T-cell (primary cell): ENCODE measurements at regions of chr20 and their contacts with region 1.

Region 1: GRCh38 chr20:24948939-24949679 is at the start of gene CST7:
- DNase-seq: peak; percentile 64 to 91 (median 83)
- ATAC-seq: peak; percentile 89 to 95 (median 92)
- H3K4me3 ChIP-seq: peak within 1 kb of the TSS in 1 of 2 donors; percentile 87
- H3K4me3 Mint-ChIP-seq: peak within 1 kb of the TSS; percentile 69 to 85 (median 80)
- H3K27ac ChIP-seq: peak within 1 kb of the TSS; percentile 95
- H3K27ac Mint-ChIP-seq: peak within 1 kb of the TSS; percentile 87 to 93
- H3K4me1 ChIP-seq: peaks cover 5 to 56% of the 10 kb centered on the region in 2 experiments
- H3K4me1 Mint-ChIP-seq: peaks cover 43 to 69% (median 51%) of the 10 kb centered on the region in 3 donors
- H3K27me3 ChIP-seq: no peaks in the 10 kb centered on the region
- H3K27me3 Mint-ChIP-seq: no peaks in the 10 kb centered on the region
- total RNA-seq, gene CST7: 22.8 to 92.0 (median 46.2) TPM

Region 2: DNA sequence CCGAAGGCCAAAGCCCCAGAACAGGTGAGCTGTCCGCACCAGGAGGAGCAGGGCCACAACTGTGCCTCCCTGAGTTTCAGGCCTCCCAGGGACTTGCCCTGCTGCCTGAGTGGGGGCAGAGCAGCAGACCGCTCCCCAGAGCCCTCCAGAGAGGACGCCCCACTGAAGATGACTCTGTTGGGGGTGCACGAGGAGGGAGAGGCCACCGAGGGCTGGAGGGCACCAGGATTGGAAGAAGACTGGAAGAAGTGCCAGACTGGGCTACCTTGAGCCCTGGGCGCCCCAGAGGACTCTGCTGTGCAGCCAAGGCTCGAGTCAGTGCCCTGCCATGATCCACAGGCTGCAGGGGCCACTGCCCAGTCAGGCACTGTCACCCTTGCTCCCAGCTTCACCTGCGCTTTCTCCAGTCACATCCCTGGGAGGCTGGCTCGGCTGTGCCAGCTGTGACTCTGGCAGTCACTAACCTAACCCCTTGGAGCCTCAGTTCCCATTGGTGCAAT is 11.2 kb after region 1 on chr20:
- CTCF ChIA-PET with region 1: interaction called in 1 of 2 experiments, 10 read pairs
- POLR2A ChIA-PET with region 1: interaction called in 1 of 2 experiments, 5 read pairs
- DNase-seq: no peak
- ATAC-seq: peak in 1 of 4 experiments; percentile 18
- H3K4me3 ChIP-seq: peak overlapping the region in 1 of 2 donors; percentile 5
- H3K4me3 Mint-ChIP-seq: no peak overlapping the region
- H3K27ac ChIP-seq: peak overlapping the region; percentile 98
- H3K27ac Mint-ChIP-seq: peak overlapping the region; percentile 77 to 88
- H3K4me1 ChIP-seq: peaks cover 0 to 94% of the 10 kb centered on the region in 2 experiments
- H3K4me1 Mint-ChIP-seq: peaks cover 8 to 59% (median 37%) of the 10 kb centered on the region in 3 donors
- H3K27me3 ChIP-seq: no peaks in the 10 kb centered on the region
- H3K27me3 Mint-ChIP-seq: no peaks in the 10 kb centered on the region